Naive thymus-derived CD8-positive, alpha-beta T cell (primary cell): ENCODE measurements at regions of chr7 and their contacts with region 1.

Region 1: GRCh38 chr7:992709-993607 is 10.0 kb downstream of the CYP2W1 start:
- DNase-seq: peak; percentile 84 to 96 (median 90)
- ATAC-seq: peak; percentile 99
- H3K4me3 Mint-ChIP-seq: no peak overlapping the region
- H3K27ac Mint-ChIP-seq: no peak overlapping the region
- H3K4me1 Mint-ChIP-seq: peaks cover 3 to 8% (median 7%) of the 10 kb centered on the region in 4 donors
- H3K27me3 Mint-ChIP-seq: no peaks in the 10 kb centered on the region

Region 2: GRCh38 chr7:1065263-1066260 is 72.6 kb after region 1 on chr7:
- POLR2A ChIA-PET with region 1: interaction called, 36 read pairs
- DNase-seq: peak; percentile 65 to 90 (median 80)
- ATAC-seq: peak; percentile 97 to 98
- H3K4me3 Mint-ChIP-seq: peak overlapping the region; percentile 53 to 81 (median 69)
- H3K27ac Mint-ChIP-seq: peak overlapping the region in 1 of 10 donors; percentile 15
- H3K4me1 Mint-ChIP-seq: peaks cover 5 to 21% (median 17%) of the 10 kb centered on the region in 4 donors
- H3K27me3 Mint-ChIP-seq: peaks cover 0 to 19% (median 0%) of the 10 kb centered on the region in 5 donors